ENCODE measurements at regions of chr17 and their contacts with region 1.

Region 1: DNA sequence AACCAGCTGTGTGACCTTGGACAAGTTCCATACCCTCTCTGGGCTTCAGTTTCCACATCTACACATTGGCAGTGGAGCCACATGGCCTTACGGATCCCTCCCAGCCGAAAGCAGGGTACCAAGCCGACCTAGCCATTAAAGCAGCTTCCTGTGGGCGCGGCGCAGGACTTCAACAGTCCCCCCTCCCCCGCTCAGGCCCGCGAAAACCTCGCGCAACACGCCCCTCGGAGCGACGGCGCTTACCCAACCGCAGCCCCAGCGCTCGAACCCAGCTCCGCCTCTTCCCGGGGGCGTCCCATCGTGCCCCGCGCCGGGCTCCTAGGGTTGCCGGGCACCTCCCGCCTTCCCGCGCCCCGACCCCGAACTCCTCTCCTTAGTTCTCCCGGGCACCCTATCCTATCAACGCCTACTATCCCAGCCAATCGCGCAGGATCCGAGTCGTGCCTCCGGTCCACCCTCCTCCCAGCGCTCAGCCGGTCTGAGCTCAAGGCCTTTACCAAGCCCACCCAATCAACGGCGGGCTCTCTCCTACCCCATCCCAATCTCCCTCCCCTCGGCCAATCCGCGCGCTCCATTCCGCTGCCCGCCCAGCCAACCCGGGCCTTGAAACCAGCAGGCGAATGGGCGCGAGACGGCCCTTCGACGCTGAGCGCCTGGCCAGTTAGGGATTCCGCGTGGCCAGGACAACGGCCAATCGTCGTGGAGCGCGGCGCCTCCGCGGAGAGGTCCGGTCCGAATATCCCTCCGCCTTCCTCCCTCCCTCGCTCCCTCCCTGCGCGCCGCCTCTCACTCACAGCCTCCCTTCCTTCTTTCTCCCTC is at the start of gene KPNB1:
- DNase-seq: peak; percentile 100
- H3K4me3 Mint-ChIP-seq: peak within 1 kb of the TSS; percentile 97
- H3K27ac Mint-ChIP-seq: peak within 1 kb of the TSS; percentile 98
- H3K4me1 Mint-ChIP-seq: peaks cover 53% of the 10 kb centered on the region
- H3K27me3 Mint-ChIP-seq: no peaks in the 10 kb centered on the region
- total RNA-seq, gene KPNB1: 602 to 614 TPM

Region 2: DNA sequence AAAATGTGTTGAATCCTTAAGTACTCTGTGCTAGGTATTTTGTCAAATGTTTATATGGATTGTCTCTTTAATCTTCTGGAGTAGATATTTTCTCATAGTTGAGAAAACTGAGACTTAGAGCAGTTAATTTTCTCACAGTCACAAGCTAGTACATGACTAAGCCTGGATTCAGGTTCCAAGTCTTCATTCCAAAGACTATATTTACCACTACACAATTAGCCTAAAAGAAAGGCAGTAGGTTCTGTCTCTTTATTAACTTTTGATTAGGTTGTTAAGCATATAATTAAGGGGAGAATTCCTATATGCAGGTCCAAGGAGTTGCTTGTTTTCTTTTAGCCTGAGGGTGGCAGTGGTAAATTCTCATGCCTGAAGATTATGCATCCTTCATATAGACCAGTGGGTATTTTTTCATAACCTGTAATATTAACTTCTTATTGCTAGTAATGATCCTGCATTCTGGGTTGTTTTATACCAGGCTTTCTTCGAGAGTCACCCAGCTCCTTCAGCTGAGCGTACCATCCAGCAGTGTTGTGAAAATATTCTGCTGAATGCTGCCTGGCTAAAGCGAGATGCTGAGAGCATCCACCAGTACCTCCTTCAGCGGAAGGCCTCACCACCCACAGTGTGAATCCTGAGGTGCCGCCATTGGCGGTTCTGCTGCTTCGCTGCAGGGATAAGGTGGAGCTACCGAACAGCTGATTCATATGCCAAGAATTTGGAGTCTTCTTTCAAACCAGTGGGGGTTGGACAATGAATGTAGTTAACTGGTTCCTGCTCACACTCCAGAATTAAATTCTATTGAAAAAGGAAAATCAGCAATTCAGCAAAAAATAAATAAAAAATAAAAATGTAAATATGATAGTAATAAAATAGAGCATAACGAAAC is 27.8 kb before region 1 on chr17:
- CTCF ChIA-PET with region 1: interaction called, 3 read pairs
- intact Hi-C with region 1: loop called (anchors 1 kb)
- DNase-seq: no peak
- H3K4me3 Mint-ChIP-seq: no peak overlapping the region
- H3K27ac Mint-ChIP-seq: peak overlapping the region; percentile 36
- H3K4me1 Mint-ChIP-seq: peaks cover 15% of the 10 kb centered on the region
- H3K27me3 Mint-ChIP-seq: no peaks in the 10 kb centered on the region

Region 3: GRCh38 chr17:47698749-47699535 is 49.6 kb after region 1 on chr17:
- CTCF ChIA-PET with region 1: no interaction called
- intact Hi-C with region 1: loop called (anchors 1 kb)
- DNase-seq: peak; percentile 92
- H3K4me3 Mint-ChIP-seq: peak overlapping the region; percentile 28
- H3K27ac Mint-ChIP-seq: peak overlapping the region; percentile 64
- H3K4me1 Mint-ChIP-seq: peaks cover 79% of the 10 kb centered on the region
- H3K27me3 Mint-ChIP-seq: no peaks in the 10 kb centered on the region

Region 4: DNA sequence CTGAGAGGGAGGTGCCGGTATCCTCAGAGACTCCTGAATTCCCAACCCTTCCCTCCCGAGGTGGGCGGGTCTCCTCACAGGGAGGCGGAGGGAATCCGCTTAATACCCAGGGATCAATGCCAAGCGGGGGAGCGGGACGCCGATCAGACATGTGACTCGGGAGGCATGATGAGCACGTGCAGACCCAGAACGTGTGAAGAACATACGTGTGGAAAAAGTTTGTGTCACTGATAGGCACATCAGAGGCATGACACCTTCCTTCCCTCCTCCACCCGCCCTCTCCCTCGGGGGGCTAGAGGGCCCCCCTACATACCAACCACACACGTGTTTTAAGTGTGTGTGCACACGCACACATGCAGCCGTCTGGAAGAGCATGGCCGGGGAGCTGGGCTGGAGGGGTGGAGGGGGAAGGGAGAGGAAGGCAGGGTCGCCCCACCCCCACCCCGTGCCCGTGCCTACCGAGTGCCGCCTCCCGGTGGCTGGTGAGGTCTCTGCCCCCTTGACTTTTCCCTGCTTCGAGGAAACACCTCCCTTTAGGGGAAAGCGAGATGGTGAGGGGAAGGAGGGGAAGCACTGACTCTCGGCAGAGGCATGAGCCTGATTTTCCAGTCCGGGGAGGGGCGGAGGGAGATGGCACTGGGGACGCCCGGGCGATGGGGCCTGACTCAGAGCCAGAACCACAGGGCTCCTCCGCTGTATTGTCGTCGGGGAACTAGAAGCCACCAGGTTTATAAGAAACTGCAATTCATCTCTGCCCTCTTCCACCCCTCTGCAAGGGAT is 71.6 kb after region 1 on chr17:
- CTCF ChIA-PET with region 1: interaction called, 3 read pairs
- intact Hi-C with region 1: loop called (anchors 1 kb)
- DNase-seq: peak; percentile 100
- H3K4me3 Mint-ChIP-seq: peak overlapping the region; percentile 62
- H3K27ac Mint-ChIP-seq: peak overlapping the region; percentile 100
- H3K4me1 Mint-ChIP-seq: peaks cover 96% of the 10 kb centered on the region
- H3K27me3 Mint-ChIP-seq: no peaks in the 10 kb centered on the region

Region 5: DNA sequence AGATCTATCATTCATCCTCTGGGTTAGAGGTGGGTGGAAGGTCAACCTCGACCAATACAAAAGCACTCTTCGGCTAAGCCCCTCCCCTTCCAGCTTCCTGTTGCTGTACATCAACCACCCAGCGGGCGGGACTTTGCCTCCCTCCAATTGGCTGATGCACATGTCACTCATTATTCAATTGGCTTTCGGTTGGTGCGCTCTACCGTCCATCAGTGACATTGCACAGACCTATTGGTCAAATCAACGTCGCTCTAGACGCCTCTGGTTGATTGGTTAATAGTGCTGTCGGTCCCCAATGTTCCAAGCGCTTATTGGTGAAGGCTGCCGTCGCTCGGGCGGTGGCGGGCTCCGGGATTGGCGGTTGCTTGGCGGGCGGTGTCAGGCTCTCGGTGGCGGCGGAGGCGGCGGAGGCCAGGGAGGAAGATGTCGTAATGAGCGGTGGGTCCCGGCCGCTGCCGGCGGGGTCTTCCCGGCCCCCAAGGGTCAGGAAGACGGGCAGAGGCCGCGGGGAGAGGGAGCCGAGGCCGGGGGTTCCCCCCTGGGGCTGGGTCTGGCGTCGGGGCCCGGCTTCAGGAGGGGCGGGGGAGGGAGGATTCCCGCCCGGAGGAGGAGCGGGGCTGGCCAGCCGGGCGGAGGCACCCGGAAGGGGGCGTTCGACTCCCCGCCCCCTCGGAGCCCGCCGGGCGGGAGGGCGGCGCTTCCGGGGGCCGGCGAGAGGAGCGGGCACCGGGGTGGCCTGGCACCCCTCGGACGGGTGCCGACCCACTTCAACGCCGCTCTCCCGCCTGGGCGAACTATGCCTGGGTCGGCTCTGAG is 246.7 kb after region 1 on chr17 and contains the start of gene SP2:
- CTCF ChIA-PET with region 1: no interaction called
- intact Hi-C with region 1: loop called (anchors 2 kb)
- DNase-seq: peak; percentile 100
- H3K4me3 Mint-ChIP-seq: peak within 1 kb of the TSS; percentile 93
- H3K27ac Mint-ChIP-seq: peak within 1 kb of the TSS; percentile 95
- H3K4me1 Mint-ChIP-seq: peaks cover 41% of the 10 kb centered on the region
- H3K27me3 Mint-ChIP-seq: no peaks in the 10 kb centered on the region
- total RNA-seq, gene SP2: 17.4 to 19.5 TPM

Region 6: DNA sequence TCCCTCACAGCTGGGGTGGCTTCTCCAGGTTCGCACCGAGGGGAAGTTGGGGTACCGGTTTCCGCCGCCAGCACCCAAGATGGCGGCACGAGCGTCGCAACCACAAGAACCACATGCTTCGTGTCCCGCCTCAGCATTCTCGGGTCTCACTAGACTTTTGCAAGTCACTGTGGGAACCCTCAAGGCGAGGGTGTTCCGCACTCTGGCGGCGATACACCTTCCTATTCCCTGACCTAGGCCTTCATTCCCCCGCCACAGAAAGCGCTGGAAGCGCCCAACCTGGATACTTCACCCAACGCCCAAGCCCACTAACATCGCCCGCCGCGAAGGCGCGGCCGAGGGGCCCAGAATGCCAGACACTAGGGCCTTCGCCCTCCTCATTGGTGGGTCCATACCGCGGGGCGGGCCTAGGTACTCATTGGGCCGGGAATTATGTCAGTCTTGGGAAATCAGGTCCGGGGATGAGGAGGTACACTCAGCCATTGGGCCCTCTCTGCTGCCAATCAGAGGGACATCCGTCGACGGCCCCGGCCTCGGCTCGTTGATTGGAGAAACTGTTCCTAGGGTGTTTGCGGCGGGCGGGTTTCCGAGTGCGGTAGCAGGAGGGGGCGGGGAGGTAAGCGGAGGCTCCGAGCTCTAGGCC is 398.5 kb after region 1 on chr17 and contains the start of gene NFE2L1:
- CTCF ChIA-PET with region 1: no interaction called
- intact Hi-C with region 1: loop called (anchors 1 kb)
- DNase-seq: peak; percentile 100
- H3K4me3 Mint-ChIP-seq: peak within 1 kb of the TSS; percentile 99
- H3K27ac Mint-ChIP-seq: peak within 1 kb of the TSS; percentile 98
- H3K4me1 Mint-ChIP-seq: peaks cover 51% of the 10 kb centered on the region
- H3K27me3 Mint-ChIP-seq: no peaks in the 10 kb centered on the region
- total RNA-seq, gene NFE2L1: 95.2 to 102 TPM